H1 (cell line): ENCODE measurements at regions of chr9 and their contacts with region 1.

Region 1: DNA sequence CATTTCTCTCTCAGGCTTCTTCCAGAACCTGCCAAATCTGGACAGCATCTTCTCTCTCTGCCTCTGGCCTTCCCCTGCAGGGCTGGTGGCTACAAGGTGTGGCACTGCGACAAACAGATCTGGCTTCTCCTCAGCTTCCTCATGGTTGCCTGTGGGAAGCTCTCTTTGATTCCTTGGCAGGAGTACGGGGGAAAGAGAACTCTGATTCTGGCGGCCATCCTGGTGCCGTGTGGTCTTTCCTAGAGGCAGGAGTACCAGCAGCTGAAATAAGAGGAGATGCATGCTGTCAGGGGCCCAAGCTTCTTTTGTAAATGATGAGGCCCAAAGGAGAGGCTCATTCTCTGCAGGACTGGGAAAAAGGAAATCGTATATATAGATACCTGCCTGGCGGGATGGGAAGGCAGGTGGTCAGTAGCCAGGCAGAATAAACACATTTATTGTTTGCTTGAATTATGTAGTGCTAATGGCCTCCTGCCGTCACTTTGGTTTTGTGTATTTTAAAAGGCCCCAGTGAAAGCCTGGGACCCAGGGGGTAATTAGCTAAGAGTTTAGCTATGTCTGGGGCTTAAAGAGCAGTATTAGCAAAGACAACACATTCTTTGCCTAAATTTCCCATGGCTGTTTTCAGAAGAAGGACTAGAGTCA is at the start of gene CER1:
- DNase-seq: peak; percentile 62 to 82
- H3K4me3 ChIP-seq: peak within 1 kb of the TSS in 1 of 4 experiments; percentile 7; a peak in 1 of 8 replicates
- H3K27ac ChIP-seq: no peak within 1 kb of the TSS
- H3K4me1 ChIP-seq: peaks cover 4 to 8% (median 6%) of the 10 kb centered on the region in 4 experiments; a peak in 6 of 7 replicates
- H3K27me3 ChIP-seq: peaks cover 35 to 73% (median 46%) of the 10 kb centered on the region in 4 experiments
- CTCF ChIP-seq: no peak
- EP300 ChIP-seq: peak in 1 of 2 experiments; percentile 61; a peak in 1 of 3 replicates
- POLR2A ChIP-seq: no peak
- RAD21 ChIP-seq: no peak
- total RNA-seq, gene CER1: 2.2 and 3.4 TPM in 2 replicates

Region 2: DNA sequence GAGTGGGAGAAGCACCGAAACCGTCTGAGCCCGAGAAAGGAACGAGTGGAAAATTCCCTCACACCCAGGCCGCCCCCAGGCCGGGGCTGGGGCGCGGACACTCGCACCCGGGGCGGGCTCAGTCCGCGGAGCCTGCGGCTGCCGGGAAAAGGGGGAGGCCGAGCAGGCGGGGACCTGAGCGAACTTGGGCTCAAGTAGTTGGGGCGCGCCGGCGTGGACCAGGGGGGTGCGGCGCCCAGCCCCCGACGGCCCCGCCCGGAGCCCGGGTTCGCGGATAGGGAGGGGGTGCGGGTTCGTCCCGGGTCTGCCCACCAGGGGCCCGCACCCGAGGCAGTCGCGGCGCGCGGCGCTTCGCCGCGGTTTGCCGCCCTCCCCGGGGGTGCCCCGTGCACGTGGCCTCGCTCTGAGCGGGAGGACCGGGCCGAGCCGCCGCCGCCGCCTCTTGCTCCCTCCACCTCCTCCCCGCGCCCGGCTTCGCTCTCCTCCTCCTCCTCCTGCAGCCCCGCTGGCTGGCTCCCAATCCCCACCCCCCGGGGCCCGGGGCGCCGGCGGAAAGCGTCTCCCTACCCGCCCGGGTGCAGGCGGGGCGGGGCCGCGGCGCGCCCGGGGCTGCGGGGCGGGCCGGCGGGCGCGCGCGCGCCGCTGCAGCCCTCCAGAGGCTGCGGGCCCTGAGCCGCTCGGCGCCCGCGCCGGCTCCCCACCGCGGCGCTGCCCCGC is 407.4 kb before region 1 on chr9:
- CTCF ChIA-PET with region 1: no interaction called
- POLR2A ChIA-PET with region 1: no interaction called
- DNase-seq: peak in 1 of 2 experiments; percentile 84
- H3K4me3 ChIP-seq: peak overlapping the region; percentile 62 to 85 (median 72)
- H3K27ac ChIP-seq: peak overlapping the region; percentile 81; the same call in 1 of the 2 replicates
- H3K4me1 ChIP-seq: peaks cover 9 to 23% (median 14%) of the 10 kb centered on the region in 4 experiments; a peak in 6 of 7 replicates
- H3K27me3 ChIP-seq: peaks cover 0 to 8% (median 0%) of the 10 kb centered on the region in 4 experiments; a peak in 3 of 7 replicates
- CTCF ChIP-seq: no peak
- EP300 ChIP-seq: no peak
- POLR2A ChIP-seq: peak in 1 of 2 experiments; percentile 51; a peak in 2 of 3 replicates
- RAD21 ChIP-seq: no peak

Region 3: DNA sequence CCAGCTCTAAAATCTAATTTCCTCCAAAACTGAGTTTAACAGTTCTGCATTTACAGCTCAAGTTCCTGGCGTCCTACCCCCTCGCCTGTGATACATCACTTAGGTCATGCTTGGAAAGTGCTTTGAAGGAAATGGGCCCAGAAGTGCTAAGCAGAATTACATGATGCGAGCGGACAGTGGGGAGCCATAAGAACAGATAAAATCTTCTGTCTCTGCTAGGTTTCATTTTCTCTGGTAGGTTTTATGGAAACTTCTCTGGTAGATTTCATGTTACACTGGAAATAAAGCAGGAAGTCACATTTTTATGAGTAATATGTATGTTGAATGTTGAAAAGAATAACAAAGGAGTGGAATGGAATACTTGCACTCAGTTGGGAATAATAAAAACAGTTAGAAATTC is 167.6 kb before region 1 on chr9:
- CTCF ChIA-PET with region 1: no interaction called
- POLR2A ChIA-PET with region 1: no interaction called
- DNase-seq: no peak
- H3K4me3 ChIP-seq: no peak overlapping the region
- H3K27ac ChIP-seq: no peak overlapping the region
- H3K4me1 ChIP-seq: no peaks in the 10 kb centered on the region
- H3K27me3 ChIP-seq: no peaks in the 10 kb centered on the region
- CTCF ChIP-seq: no peak
- EP300 ChIP-seq: no peak
- POLR2A ChIP-seq: no peak
- RAD21 ChIP-seq: no peak

Region 4: GRCh38 chr9:14693206-14693861 is 29.2 kb before region 1 on chr9 and contains the start of gene ZDHHC21:
- CTCF ChIA-PET with region 1: interaction called, 11 read pairs
- POLR2A ChIA-PET with region 1: interaction called, 9 read pairs
- DNase-seq: peak; percentile 10 to 83
- H3K4me3 ChIP-seq: peak within 1 kb of the TSS; percentile 68 to 75 (median 74)
- H3K27ac ChIP-seq: peak within 1 kb of the TSS; percentile 82
- H3K4me1 ChIP-seq: peaks cover 0 to 2% (median under 1%) of the 10 kb centered on the region in 4 experiments; a peak in 2 of 7 replicates
- H3K27me3 ChIP-seq: peaks cover 0 to 5% (median 3%) of the 10 kb centered on the region in 4 experiments; a peak in 1 of 7 replicates
- CTCF ChIP-seq: no peak
- EP300 ChIP-seq: no peak; a peak in 1 of 3 replicates
- POLR2A ChIP-seq: peak in 1 of 2 experiments; percentile 66; a peak in 2 of 3 replicates
- RAD21 ChIP-seq: no peak
- total RNA-seq, gene ZDHHC21: 4.8 and 6.0 TPM in 2 replicates

Region 5: GRCh38 chr9:14744768-14745167 is 22.3 kb after region 1 on chr9:
- CTCF ChIA-PET with region 1: no interaction called
- POLR2A ChIA-PET with region 1: no interaction called
- DNase-seq: no peak
- H3K4me3 ChIP-seq: no peak overlapping the region
- H3K27ac ChIP-seq: no peak overlapping the region
- H3K4me1 ChIP-seq: peaks cover 0 to 4% (median under 1%) of the 10 kb centered on the region in 4 experiments; a peak in 3 of 7 replicates
- H3K27me3 ChIP-seq: no peaks in the 10 kb centered on the region
- CTCF ChIP-seq: no peak
- EP300 ChIP-seq: no peak
- POLR2A ChIP-seq: no peak
- RAD21 ChIP-seq: no peak

Region 6: GRCh38 chr9:14838701-14839100 is 116.2 kb after region 1 on chr9:
- CTCF ChIA-PET with region 1: no interaction called
- POLR2A ChIA-PET with region 1: no interaction called
- DNase-seq: no peak
- H3K4me3 ChIP-seq: no peak overlapping the region
- H3K27ac ChIP-seq: no peak overlapping the region
- H3K4me1 ChIP-seq: no peaks in the 10 kb centered on the region
- H3K27me3 ChIP-seq: no peaks in the 10 kb centered on the region
- CTCF ChIP-seq: no peak
- EP300 ChIP-seq: no peak
- POLR2A ChIP-seq: no peak
- RAD21 ChIP-seq: no peak